ENCODE measurements at regions of chr21 and their contacts with region 1.

Region 1: DNA sequence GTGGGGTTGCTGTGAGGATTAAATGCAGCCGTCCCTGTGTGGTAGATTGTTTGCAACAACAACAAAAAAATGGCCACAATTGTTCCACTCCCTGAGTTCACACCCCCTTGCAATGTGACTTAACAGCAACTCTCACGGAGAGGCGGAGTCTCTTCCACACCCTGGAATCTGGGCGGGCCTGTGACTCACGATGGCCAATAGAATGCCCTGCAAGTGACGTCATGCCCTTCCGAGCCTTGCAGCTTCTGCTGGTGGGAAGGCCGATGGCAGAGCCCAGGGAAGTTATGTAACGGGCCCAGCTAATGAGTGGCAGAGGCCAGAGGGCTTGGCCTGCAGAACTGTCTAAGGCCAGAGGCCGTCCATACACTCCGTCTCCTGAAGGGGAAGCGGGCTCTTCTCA is 87.9 kb downstream of the RIPK4 start:
- DNase-seq: peak; percentile 96 to 99
- H3K4me3 ChIP-seq: peak overlapping the region; percentile 29
- H3K4me3 Mint-ChIP-seq: peak overlapping the region; percentile 74
- H3K27ac Mint-ChIP-seq: peak overlapping the region; percentile 96
- H3K4me1 ChIP-seq: peaks cover 32% of the 10 kb centered on the region
- H3K4me1 Mint-ChIP-seq: peaks cover 2% of the 10 kb centered on the region
- H3K27me3 ChIP-seq: no peaks in the 10 kb centered on the region
- H3K27me3 Mint-ChIP-seq: no peaks in the 10 kb centered on the region
- CTCF ChIP-seq: no peak

Region 2: DNA sequence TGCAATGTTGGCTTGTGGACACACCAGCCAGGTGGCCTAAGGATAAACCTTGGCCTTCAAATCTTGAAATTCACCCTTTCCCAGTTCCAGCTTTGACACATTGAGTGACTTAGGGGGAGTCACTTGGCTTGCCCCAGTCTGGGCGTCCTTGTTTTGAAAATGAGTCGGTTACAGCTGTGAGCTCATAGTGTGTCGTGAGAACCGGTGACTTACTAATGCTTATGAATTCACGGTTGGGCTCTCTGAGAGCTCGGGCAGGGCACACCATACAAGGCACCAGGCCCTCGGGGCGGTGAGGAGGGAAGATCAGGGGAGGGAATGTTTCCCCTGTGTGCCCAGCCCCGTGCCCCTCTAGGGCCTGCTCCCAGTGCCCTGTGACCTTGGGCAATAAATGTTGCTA is 44.1 kb before region 1 on chr21:
- CTCF ChIA-PET with region 1: interaction called, 3 read pairs
- POLR2A ChIA-PET with region 1: interaction called, 6 read pairs
- intact Hi-C with region 1: loop called (anchors 2 kb)
- DNase-seq: peak in 1 of 2 experiments; percentile 26
- H3K4me3 ChIP-seq: no peak overlapping the region
- H3K4me3 Mint-ChIP-seq: no peak overlapping the region
- H3K27ac Mint-ChIP-seq: peak overlapping the region; percentile 36
- H3K4me1 ChIP-seq: peaks cover 30% of the 10 kb centered on the region
- H3K4me1 Mint-ChIP-seq: peaks cover 24% of the 10 kb centered on the region
- H3K27me3 ChIP-seq: no peaks in the 10 kb centered on the region; the same call in 1 of the 2 replicates
- H3K27me3 Mint-ChIP-seq: no peaks in the 10 kb centered on the region
- CTCF ChIP-seq: no peak

Region 3: GRCh38 chr21:41663801-41664788 is 14.8 kb before region 1 on chr21:
- CTCF ChIA-PET with region 1: interaction called, 6 read pairs
- POLR2A ChIA-PET with region 1: interaction called, 6 read pairs
- intact Hi-C with region 1: loop called (anchors 2 kb)
- DNase-seq: peak; percentile 68 to 80
- H3K4me3 ChIP-seq: no peak overlapping the region
- H3K4me3 Mint-ChIP-seq: peak overlapping the region; percentile 52
- H3K27ac Mint-ChIP-seq: peak overlapping the region; percentile 85
- H3K4me1 ChIP-seq: peaks cover 31% of the 10 kb centered on the region
- H3K4me1 Mint-ChIP-seq: peaks cover 28% of the 10 kb centered on the region
- H3K27me3 ChIP-seq: no peaks in the 10 kb centered on the region
- H3K27me3 Mint-ChIP-seq: no peaks in the 10 kb centered on the region
- CTCF ChIP-seq: no peak

Region 4: DNA sequence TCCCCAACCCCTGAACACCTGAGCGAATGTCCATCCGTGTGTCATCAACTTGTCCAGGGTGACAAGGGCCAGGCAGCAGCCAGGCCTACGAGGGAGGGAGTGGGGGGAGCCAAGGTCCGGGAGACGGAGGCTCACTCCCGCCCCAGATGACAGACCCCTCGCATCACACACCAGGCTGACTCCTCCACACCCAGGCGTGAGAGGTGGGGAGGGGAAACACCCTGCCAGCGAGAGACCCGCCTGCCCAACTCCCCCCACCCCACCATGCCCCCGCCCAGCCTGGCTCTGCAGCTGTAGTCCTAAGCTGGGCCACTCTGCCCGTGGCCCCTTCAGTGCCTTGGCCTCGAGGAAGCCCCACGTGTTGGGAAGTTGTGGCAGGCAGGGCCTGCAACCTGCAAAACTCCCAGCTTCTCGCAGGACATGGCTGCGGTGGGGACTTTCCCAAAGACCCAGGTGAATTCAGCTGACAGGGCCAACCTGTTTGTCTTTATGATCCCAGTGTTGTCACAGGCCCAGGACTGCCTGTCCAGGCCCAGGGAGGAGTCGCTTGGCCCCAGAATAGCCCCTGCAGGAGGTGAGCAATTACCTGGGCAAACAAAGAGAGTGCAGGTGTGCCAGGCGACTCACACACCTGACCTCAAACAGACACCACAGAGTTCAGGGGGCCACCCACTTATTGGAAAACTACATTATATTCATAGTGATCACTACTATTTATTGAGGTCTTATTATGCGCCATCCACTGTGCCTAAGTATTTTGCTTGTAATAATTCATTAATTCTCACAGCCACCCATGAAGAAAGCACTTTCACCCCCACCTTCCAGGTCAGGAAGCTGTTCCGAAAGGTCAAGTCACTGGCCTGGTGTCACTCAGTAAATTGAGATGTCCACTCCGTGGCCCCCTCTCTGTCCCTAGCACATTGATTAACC is 25.2 kb after region 1 on chr21:
- CTCF ChIA-PET with region 1: interaction called, 6 read pairs
- POLR2A ChIA-PET with region 1: interaction called, 5 read pairs
- intact Hi-C with region 1: loop called (anchors 1 kb)
- DNase-seq: peak; percentile 85 to 92
- H3K4me3 ChIP-seq: no peak overlapping the region
- H3K4me3 Mint-ChIP-seq: peak overlapping the region; percentile 28
- H3K27ac Mint-ChIP-seq: peak overlapping the region; percentile 67
- H3K4me1 ChIP-seq: peaks cover 53% of the 10 kb centered on the region
- H3K4me1 Mint-ChIP-seq: peaks cover 40% of the 10 kb centered on the region
- H3K27me3 ChIP-seq: no peaks in the 10 kb centered on the region
- H3K27me3 Mint-ChIP-seq: no peaks in the 10 kb centered on the region
- CTCF ChIP-seq: no peak

Region 5: GRCh38 chr21:41715649-41716281 is 36.8 kb after region 1 on chr21:
- CTCF ChIA-PET with region 1: interaction called, 10 read pairs
- POLR2A ChIA-PET with region 1: interaction called, 34 read pairs
- intact Hi-C with region 1: loop called (anchors 1 kb)
- DNase-seq: peak; percentile 97 to 99
- H3K4me3 ChIP-seq: no peak overlapping the region
- H3K4me3 Mint-ChIP-seq: peak overlapping the region; percentile 88
- H3K27ac Mint-ChIP-seq: peak overlapping the region; percentile 88
- H3K4me1 ChIP-seq: peaks cover 65% of the 10 kb centered on the region
- H3K4me1 Mint-ChIP-seq: peaks cover 41% of the 10 kb centered on the region
- H3K27me3 ChIP-seq: no peaks in the 10 kb centered on the region
- H3K27me3 Mint-ChIP-seq: no peaks in the 10 kb centered on the region
- CTCF ChIP-seq: no peak

Region 6: DNA sequence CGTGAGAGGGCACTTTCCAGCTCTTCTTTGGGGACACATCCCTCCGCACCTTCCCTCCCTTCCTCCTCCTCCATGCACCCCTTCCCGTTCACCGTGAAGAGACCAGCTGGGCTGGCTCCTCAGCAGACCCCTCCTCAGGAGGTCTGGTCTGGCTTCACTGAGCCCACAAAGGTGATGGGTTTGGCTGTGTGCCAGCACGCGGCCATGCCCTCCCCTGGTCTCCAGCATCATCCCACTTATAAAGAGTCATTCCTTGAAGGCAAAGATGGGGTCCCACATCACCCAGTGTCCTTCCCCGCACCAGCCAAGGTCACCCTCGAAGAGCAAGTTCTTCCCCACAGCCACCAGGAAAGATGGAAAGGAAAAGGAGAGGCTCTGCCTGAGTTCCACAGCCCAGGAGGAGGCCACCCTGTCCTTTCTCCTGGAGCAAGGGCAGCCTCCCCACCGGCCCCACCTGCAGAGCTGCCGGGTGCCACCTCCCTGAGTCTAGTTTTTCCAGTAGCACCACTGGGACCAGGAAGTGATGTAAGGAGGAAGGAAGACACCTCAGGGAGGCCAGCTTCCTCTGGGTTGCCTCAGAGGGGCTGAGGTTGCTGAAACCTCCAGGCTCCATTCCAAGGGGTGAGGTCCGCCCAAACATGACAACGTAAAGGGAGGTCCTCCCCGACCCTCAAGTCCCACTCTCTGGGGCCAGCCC is 55.2 kb after region 1 on chr21:
- CTCF ChIA-PET with region 1: no interaction called
- POLR2A ChIA-PET with region 1: no interaction called
- intact Hi-C with region 1: no loop called
- DNase-seq: no peak
- H3K4me3 ChIP-seq: no peak overlapping the region
- H3K4me3 Mint-ChIP-seq: no peak overlapping the region
- H3K27ac Mint-ChIP-seq: no peak overlapping the region
- H3K4me1 ChIP-seq: 0 out of 2 replicates have a peak, but pooled peaks cover 11% of the 10 kb centered on the region
- H3K4me1 Mint-ChIP-seq: peaks cover 9% of the 10 kb centered on the region
- H3K27me3 ChIP-seq: no peaks in the 10 kb centered on the region
- H3K27me3 Mint-ChIP-seq: no peaks in the 10 kb centered on the region
- CTCF ChIP-seq: no peak

Region 7: GRCh38 chr21:41752231-41752681 is 73.3 kb after region 1 on chr21:
- CTCF ChIA-PET with region 1: no interaction called
- POLR2A ChIA-PET with region 1: no interaction called
- intact Hi-C with region 1: loop called (anchors 5 kb)
- DNase-seq: no peak
- H3K4me3 ChIP-seq: no peak overlapping the region
- H3K4me3 Mint-ChIP-seq: peak overlapping the region; percentile 1
- H3K27ac Mint-ChIP-seq: peak overlapping the region; percentile 39
- H3K4me1 ChIP-seq: peaks cover 39% of the 10 kb centered on the region
- H3K4me1 Mint-ChIP-seq: peaks cover 28% of the 10 kb centered on the region
- H3K27me3 ChIP-seq: no peaks in the 10 kb centered on the region
- H3K27me3 Mint-ChIP-seq: no peaks in the 10 kb centered on the region
- CTCF ChIP-seq: no peak

Region 8: DNA sequence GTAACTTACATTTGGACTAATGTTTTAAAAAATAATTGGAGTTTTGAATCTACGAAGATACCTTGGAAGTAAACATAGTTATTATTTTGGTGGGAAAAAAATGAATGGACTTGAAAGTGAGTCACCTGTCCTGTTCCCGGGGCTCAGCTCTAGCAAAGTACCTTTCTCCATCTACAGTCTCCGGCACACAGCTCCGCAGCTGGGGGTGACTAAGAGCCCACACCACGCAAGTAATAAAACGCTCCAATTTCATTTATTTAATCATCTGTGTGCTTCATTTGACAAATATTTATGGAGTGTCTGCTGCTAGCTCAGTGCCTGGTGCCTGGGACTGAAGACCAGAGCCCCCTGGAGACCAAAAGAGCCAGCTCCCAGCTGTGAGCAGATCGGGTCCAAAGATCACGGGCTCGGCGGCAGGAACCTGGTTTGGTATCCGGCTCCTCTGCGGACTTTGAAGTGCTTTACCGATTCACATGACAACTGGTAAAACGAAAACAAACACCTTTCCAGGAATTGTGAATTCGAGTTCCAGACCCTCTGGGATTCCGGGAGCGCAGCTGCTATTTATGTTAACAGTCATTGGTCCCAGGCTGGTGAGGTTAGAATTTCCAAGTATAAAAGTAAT is 89.6 kb after region 1 on chr21:
- CTCF ChIA-PET with region 1: interaction called, 5 read pairs
- POLR2A ChIA-PET with region 1: interaction called, 12 read pairs
- intact Hi-C with region 1: loop called (anchors 1 kb)
- DNase-seq: peak; percentile 91 to 93
- H3K4me3 ChIP-seq: peak overlapping the region; percentile 90
- H3K4me3 Mint-ChIP-seq: peak overlapping the region; percentile 90
- H3K27ac Mint-ChIP-seq: peak overlapping the region; percentile 94
- H3K4me1 ChIP-seq: peaks cover 40% of the 10 kb centered on the region
- H3K4me1 Mint-ChIP-seq: peaks cover 64% of the 10 kb centered on the region
- H3K27me3 ChIP-seq: no peaks in the 10 kb centered on the region
- H3K27me3 Mint-ChIP-seq: no peaks in the 10 kb centered on the region
- CTCF ChIP-seq: peak; percentile 41 to 68